Adrenal gland (tissue), 19 donors: ENCODE measurements at regions of chr9 and their contacts with region 1.

Region 1: GRCh38 chr9:38119699-38120236 is 50.7 kb upstream of the SHB start:
- DNase-seq: peak in 1 of 7 donors; percentile 20
- H3K4me3 ChIP-seq: no peak overlapping the region
- H3K27ac ChIP-seq: no peak overlapping the region
- H3K4me1 ChIP-seq: no peaks in the 10 kb centered on the region
- H3K27me3 ChIP-seq: no peaks in the 10 kb centered on the region
- CTCF ChIP-seq: no peak
- POLR2A ChIP-seq: no peak

Region 2: GRCh38 chr9:38227061-38227540 is 107.3 kb after region 1 on chr9:
- intact Hi-C with region 1: no loop called
- DNase-seq: peak in 6 of 7 donors; percentile 14 to 54 (median 22)
- H3K4me3 ChIP-seq: no peak overlapping the region
- H3K27ac ChIP-seq: no peak overlapping the region
- H3K4me1 ChIP-seq: no peaks in the 10 kb centered on the region
- H3K27me3 ChIP-seq: peaks cover 14% of the 10 kb centered on the region
- CTCF ChIP-seq: no peak
- POLR2A ChIP-seq: no peak

Region 3: DNA sequence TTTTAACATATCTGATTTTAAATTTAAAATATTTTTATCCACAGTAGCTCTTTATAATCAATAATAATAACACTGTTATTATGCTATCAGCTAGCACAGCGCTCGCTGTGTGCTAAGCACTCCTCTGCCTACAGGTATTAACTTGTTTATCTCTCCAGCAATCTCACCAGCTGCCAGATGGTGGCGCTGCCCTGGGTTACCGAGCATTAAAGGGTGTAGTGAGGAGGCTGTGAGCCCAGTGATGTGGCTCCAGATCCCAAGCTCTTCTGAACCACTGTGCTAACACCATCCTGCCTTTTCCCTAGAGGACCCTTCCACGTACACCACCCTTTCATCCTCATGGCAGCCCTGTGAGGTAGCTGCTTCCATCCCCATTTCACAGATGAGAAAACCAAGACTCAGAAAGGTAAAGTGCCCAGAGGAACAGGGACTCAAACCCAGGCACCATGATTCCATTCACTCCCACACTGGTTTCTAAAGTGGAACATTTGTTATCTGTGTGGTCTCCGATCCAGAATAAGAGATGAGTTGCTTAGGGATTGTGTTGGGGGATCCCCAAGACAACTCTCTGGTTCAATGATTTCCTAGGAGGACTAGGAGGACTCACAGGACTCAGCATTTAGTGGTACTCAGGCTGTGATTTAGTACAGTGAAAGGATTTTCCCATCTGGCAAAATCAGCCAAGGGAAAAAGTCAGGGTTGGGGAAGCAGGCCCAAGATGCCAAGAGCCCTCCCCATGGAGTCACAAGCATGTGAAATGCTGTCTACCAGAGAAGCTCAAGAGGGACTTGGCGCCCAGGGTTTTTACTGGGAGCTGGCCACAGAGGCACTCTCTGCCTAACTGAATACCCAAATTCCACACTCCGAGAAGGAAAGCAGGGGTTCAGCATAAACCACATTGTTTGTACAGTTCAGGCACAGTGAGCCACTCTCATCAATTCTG is 297.5 kb after region 1 on chr9:
- intact Hi-C with region 1: loop called in 1 of 2 experiments (anchors 5 kb)
- DNase-seq: peak in 3 of 7 donors; percentile 30 to 72 (median 39)
- H3K4me3 ChIP-seq: no peak overlapping the region
- H3K27ac ChIP-seq: no peak overlapping the region
- H3K4me1 ChIP-seq: no peaks in the 10 kb centered on the region
- H3K27me3 ChIP-seq: peaks cover 5% of the 10 kb centered on the region
- CTCF ChIP-seq: peak in 3 of 6 experiments; percentile 26 to 41 (median 33)
- POLR2A ChIP-seq: no peak